ENCODE measurements at regions of chr18 and their contacts with region 1.

Region 1: GRCh38 chr18:26383454-26384270 is 157.4 kb downstream of the TAF4B start:
- DNase-seq: no peak
- ATAC-seq: no peak
- H3K4me3 ChIP-seq: no peak overlapping the region
- H3K27ac ChIP-seq: no peak overlapping the region
- H3K4me1 ChIP-seq: peaks cover 0 to 20% (median 9%) of the 10 kb centered on the region in 12 donors
- H3K27me3 ChIP-seq: no peaks in the 10 kb centered on the region
- CTCF ChIP-seq: peak; percentile 62 to 83 (median 75)
- POLR2A ChIP-seq: no peak

Region 2: GRCh38 chr18:26082475-26082874 is 301.2 kb before region 1 on chr18:
- intact Hi-C with region 1: no loop called
- DNase-seq: no peak
- ATAC-seq: no peak
- H3K4me3 ChIP-seq: no peak overlapping the region
- H3K27ac ChIP-seq: no peak overlapping the region
- H3K4me1 ChIP-seq: peaks cover 0 to 17% (median under 1%) of the 10 kb centered on the region in 12 donors
- H3K27me3 ChIP-seq: no peaks in the 10 kb centered on the region
- CTCF ChIP-seq: no peak
- POLR2A ChIP-seq: no peak

Region 3: GRCh38 chr18:26307189-26307773 is 76.4 kb before region 1 on chr18:
- intact Hi-C with region 1: loop called in 2 of 10 experiments (anchors 5 to 10 kb)
- DNase-seq: no peak
- ATAC-seq: peak in 2 of 4 donors; percentile 54 to 63
- H3K4me3 ChIP-seq: no peak overlapping the region
- H3K27ac ChIP-seq: no peak overlapping the region
- H3K4me1 ChIP-seq: no peaks in the 10 kb centered on the region
- H3K27me3 ChIP-seq: no peaks in the 10 kb centered on the region
- CTCF ChIP-seq: peak; percentile 34 to 69 (median 56)
- POLR2A ChIP-seq: no peak

Region 4: GRCh38 chr18:26548429-26549262 is 165.0 kb after region 1 on chr18 and contains the start of gene KCTD1:
- intact Hi-C with region 1: loop called in 3 of 10 experiments (anchors 2 to 10 kb)
- DNase-seq: peak; percentile 77 to 91 (median 83)
- ATAC-seq: peak; percentile 61 to 83 (median 78)
- H3K4me3 ChIP-seq: peak within 1 kb of the TSS; percentile 67 to 93 (median 77)
- H3K27ac ChIP-seq: peak within 1 kb of the TSS; percentile 48 to 83 (median 74)
- H3K4me1 ChIP-seq: peaks cover 0 to 56% (median 34%) of the 10 kb centered on the region in 12 donors
- H3K27me3 ChIP-seq: peaks cover 0 to 43% (median 14%) of the 10 kb centered on the region in 9 donors
- CTCF ChIP-seq: no peak
- POLR2A ChIP-seq: no peak
- total RNA-seq, gene KCTD1: 8.4 to 21.8 (median 10.0) TPM

Region 5: GRCh38 chr18:26648509-26649192 is 265.0 kb after region 1 on chr18:
- intact Hi-C with region 1: loop called in 8 of 10 experiments (anchors 2 to 5 kb)
- DNase-seq: no peak
- ATAC-seq: no peak
- H3K4me3 ChIP-seq: no peak overlapping the region
- H3K27ac ChIP-seq: no peak overlapping the region
- H3K4me1 ChIP-seq: peaks cover 0 to 7% (median 0%) of the 10 kb centered on the region in 12 donors
- H3K27me3 ChIP-seq: peaks cover 0 to 14% (median 0%) of the 10 kb centered on the region in 9 donors
- CTCF ChIP-seq: no peak
- POLR2A ChIP-seq: no peak

Region 6: GRCh38 chr18:26963292-26963691 is 579.6 kb after region 1 on chr18:
- intact Hi-C with region 1: loop called in 1 of 10 experiments (anchors 10 kb)
- DNase-seq: no peak
- ATAC-seq: peak in 3 of 4 donors; percentile 52 to 56 (median 54)
- H3K4me3 ChIP-seq: no peak overlapping the region
- H3K27ac ChIP-seq: no peak overlapping the region
- H3K4me1 ChIP-seq: peaks cover 0 to 9% (median 0%) of the 10 kb centered on the region in 12 donors
- H3K27me3 ChIP-seq: no peaks in the 10 kb centered on the region
- CTCF ChIP-seq: peak; percentile 9 to 51 (median 35)
- POLR2A ChIP-seq: no peak

Measured in heart left ventricle (tissue), 16 donors.